K562 (cell line): ENCODE measurements at regions of chr2 and their contacts with region 1.

Region 1: GRCh38 chr2:238106686-238107524 is 6.8 kb downstream of the ESPNL start:
- DNase-seq: peak; percentile 63 to 75 (median 71)
- ATAC-seq: peak; percentile 78
- H3K4me3 ChIP-seq: no peak overlapping the region
- H3K27ac ChIP-seq: no peak overlapping the region
- H3K4me1 ChIP-seq: peaks cover 4 to 40% of the 10 kb centered on the region in 2 experiments; a peak in 3 of 5 replicates
- H3K27me3 ChIP-seq: no peaks in the 10 kb centered on the region
- CTCF ChIP-seq: peak; percentile 51 to 65 (median 54); a peak in 5 of 6 replicates
- EP300 ChIP-seq: no peak
- POLR2A ChIP-seq: no peak
- RAD21 ChIP-seq: peak; percentile 38 to 63; a peak in 3 of 4 replicates

Region 2: GRCh38 chr2:237858294-237859081 is 248.4 kb before region 1 on chr2:
- CTCF ChIA-PET with region 1: interaction called, 5 read pairs
- POLR2A ChIA-PET with region 1: no interaction called
- in situ Hi-C with region 1: loop called (anchors 10 kb)
- intact Hi-C with region 1: loop called (anchors 1 kb)
- DNase-seq: peak; percentile 37 to 62 (median 48)
- ATAC-seq: peak; percentile 98
- H3K4me3 ChIP-seq: no peak overlapping the region
- H3K27ac ChIP-seq: no peak overlapping the region
- H3K4me1 ChIP-seq: peaks cover 0 to 8% of the 10 kb centered on the region in 2 experiments; a peak in 1 of 5 replicates
- H3K27me3 ChIP-seq: peaks cover 10 to 47% of the 10 kb centered on the region in 2 experiments; a peak in 4 of 5 replicates
- CTCF ChIP-seq: peak; percentile 64 to 78 (median 67)
- EP300 ChIP-seq: no peak
- POLR2A ChIP-seq: no peak
- RAD21 ChIP-seq: peak; percentile 83 to 88

Region 3: DNA sequence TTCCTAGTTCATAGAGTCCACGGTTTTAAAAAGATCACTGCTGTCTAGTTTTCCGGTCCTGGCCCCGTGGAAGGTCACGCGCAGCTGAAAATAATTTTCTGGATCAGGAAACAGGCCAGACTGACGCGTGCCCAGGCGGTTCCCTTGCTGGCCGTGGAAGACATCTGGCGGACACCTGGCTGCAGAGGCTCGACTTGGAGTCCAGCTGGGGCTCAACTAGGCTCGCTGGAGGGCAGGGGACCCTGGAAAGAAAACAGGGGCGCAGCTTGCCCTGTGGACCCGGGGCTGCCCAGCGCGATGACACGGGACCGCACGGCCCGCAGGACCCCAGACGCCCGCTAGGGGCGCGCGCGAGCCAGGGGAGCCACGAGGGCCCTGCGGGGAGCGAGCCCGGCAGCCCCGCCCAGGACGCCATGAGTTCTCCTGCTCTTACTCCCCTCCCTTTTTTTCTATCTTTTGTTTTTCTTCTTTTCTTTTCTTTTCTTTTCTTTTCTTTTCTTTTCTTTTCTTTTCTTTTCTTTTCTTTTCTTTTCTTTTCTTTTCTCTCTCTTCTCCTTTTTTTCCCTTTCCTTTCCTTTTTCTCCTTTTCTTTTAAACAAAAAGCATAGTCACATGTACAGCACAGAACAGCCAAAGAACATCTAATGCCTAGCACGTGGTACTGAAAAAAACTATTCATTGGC is 183.3 kb before region 1 on chr2:
- CTCF ChIA-PET with region 1: interaction called, 3 read pairs
- POLR2A ChIA-PET with region 1: no interaction called
- in situ Hi-C with region 1: no loop called
- intact Hi-C with region 1: loop called (anchors 5 kb)
- DNase-seq: peak; percentile 82 to 95 (median 94)
- ATAC-seq: peak; percentile 99
- H3K4me3 ChIP-seq: peak overlapping the region; percentile 31
- H3K27ac ChIP-seq: no peak overlapping the region; the same call in 2 of the 3 replicates
- H3K4me1 ChIP-seq: peaks cover 7 to 12% of the 10 kb centered on the region in 2 experiments
- H3K27me3 ChIP-seq: no peaks in the 10 kb centered on the region
- CTCF ChIP-seq: peak; percentile 82 to 86 (median 85)
- EP300 ChIP-seq: no peak
- POLR2A ChIP-seq: no peak
- RAD21 ChIP-seq: peak; percentile 77 to 82

Region 4: DNA sequence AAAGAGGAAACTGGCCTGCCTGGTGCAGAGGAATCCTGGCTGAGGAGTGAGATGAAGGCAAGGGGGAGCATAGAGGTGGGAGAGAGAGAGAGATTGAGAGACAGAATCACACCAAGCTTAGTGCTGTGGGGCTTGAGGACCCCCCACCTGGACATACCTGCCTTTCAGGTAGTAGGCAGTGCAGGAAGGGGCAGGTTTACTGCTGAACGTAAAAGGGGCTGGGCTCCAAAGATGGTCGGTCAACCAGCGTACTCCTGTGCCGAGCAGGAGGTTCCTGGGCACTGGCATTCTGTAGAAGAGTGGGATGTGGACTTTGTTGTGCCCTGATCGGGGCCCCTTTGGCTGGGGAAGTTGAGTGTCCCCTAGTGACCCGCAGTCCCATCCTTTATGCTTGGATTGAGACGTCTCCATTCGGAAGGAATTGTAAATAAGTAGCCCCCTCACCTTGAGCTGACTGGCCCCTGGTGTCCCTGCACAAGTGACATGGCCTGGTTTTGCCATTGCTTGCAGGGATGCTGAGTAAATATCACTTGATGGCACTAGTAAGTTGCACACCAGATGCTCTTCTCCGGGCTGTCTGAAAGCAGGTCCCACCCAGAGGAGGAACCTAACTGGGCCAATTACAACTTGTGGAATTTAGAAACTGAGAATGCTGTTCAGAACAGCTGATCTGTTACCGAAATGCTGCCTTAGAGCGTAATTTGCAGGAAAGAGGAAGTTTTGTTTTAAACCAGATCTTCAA is 138.6 kb before region 1 on chr2:
- CTCF ChIA-PET with region 1: no interaction called
- POLR2A ChIA-PET with region 1: no interaction called
- in situ Hi-C with region 1: no loop called
- intact Hi-C with region 1: loop called (anchors 2 kb)
- DNase-seq: peak in 2 of 4 experiments; percentile 47 to 52
- ATAC-seq: peak; percentile 8; the same call in 2 of the 3 replicates
- H3K4me3 ChIP-seq: peak overlapping the region; percentile 79
- H3K27ac ChIP-seq: no peak overlapping the region; the same call in 2 of the 3 replicates
- H3K4me1 ChIP-seq: peaks cover 37 to 41% of the 10 kb centered on the region in 2 experiments
- H3K27me3 ChIP-seq: no peaks in the 10 kb centered on the region
- CTCF ChIP-seq: peak in 2 of 3 experiments; percentile 3 to 41; a peak in 2 of 6 replicates
- EP300 ChIP-seq: no peak
- POLR2A ChIP-seq: no peak
- RAD21 ChIP-seq: peak in 1 of 2 experiments; percentile 30; a peak in 2 of 4 replicates